GM10248 (cell line): ENCODE measurements at regions of chr3 and their contacts with region 1.

Region 1: DNA sequence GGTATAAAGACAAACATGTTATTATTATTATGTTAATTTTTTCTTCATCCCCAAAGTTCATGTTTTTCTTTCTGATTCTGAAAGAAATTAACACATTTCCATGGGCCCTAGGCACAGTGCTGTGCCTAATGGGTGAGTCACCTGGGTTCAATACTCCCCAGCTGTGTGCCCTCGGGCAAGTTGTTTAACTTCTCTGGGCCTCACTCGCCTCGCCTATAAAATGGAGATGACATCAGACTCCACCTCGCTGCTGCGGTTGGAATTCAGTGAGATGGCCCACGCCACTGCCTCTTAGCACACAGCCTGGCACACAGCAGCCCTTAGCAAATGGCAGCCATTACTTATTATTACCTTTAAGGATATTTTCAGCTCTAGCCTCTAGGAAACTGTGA is 22.6 kb downstream of the DNASE1L3 start:
- DNase-seq: no peak
- CTCF ChIP-seq: no peak

Region 2: DNA sequence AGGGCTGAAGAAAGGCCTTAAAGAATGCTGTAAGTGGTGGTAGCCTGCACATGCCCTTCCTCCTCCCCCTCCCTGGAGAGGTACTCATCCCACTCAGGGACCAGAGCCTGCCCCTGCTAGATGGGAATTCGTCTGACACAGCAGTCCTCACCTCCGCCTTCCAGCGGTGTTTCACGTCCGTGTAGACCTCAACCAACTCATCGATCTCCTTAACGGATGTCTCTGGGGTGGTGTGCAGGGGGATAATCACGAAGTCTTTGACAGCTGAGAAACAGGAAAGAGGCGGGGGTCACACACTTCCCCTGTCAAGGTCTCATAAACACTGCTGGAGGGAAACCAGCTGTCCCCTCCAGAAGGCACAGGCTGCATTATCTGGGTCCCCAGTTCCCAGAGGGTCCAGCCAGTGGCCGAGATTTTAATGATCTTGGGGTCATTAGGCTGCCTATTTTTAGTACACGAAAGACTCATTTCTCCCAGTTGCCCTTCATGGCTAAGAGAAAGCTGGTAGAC is 12.7 kb after region 1 on chr3:
- CTCF ChIA-PET with region 1: interaction called, 28 read pairs
- POLR2A ChIA-PET with region 1: no interaction called
- DNase-seq: no peak
- CTCF ChIP-seq: no peak

Region 3: GRCh38 chr3:58217209-58217811 is 29.1 kb after region 1 on chr3:
- CTCF ChIA-PET with region 1: interaction called, 195 read pairs
- POLR2A ChIA-PET with region 1: no interaction called
- DNase-seq: peak; percentile 56
- CTCF ChIP-seq: peak; percentile 69

Region 4: GRCh38 chr3:58271901-58272501 is 83.8 kb after region 1 on chr3:
- CTCF ChIA-PET with region 1: interaction called, 10 read pairs
- POLR2A ChIA-PET with region 1: no interaction called
- DNase-seq: no peak
- CTCF ChIP-seq: no peak